HCT116 (cell line): ENCODE measurements at regions of chr9 and their contacts with region 1.

Region 1: DNA sequence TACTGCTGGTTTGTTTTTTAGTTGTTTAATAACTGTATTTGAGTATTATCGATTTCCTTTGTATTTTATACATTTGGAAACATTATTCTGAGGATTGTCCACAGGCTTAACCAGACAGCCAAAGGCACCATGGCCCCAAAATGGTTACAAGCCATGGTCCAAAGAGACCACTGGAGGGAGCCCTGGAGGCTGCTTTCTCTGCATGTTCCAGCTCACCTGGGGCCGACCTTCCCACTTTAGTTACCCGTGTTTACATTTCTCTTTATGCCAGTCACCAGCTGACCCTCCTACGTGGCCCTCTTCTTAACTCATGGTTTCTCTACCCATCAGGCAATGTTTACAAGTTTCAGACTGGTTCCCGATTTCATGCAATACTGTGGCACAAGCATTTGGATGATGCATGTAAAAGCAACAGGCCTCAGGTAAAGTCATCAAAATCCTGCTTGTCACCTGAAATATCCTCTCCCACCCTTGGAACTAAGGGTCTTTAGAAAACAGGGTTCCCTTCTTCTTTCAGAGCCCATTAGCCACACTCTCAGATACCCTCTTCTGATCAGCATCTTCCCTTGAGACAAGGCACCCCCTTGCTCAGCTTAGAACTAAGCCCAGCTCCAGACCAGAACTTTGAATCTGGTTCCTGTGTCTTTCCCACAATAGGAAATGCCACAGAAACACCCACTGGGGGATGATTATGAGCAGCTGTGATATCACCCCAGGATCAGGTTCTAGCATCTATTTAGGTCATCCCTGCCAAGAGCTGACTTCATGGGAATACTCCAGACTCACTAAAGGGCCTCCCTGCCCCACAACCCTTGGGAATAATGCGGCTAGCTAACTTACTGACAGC is 49.9 kb upstream of the GARNL3 start:
- DNase-seq: peak; percentile 48
- ATAC-seq: peak; percentile 86
- H3K4me3 ChIP-seq: no peak overlapping the region
- H3K27ac ChIP-seq: no peak overlapping the region
- H3K4me1 ChIP-seq: peaks cover 0 to 4% of the 10 kb centered on the region in 2 experiments; a peak in 1 of 4 replicates
- H3K27me3 ChIP-seq: no peaks in the 10 kb centered on the region
- CTCF ChIP-seq: peak; percentile 78 to 91 (median 90)
- POLR2A ChIP-seq: no peak
- RAD21 ChIP-seq: peak; percentile 88

Region 2: GRCh38 chr9:126939821-126940221 is 274.8 kb before region 1 on chr9:
- CTCF ChIA-PET with region 1: interaction called, 15 read pairs
- POLR2A ChIA-PET with region 1: no interaction called
- RAD21 ChIA-PET with region 1: no interaction called
- intact Hi-C with region 1: no loop called
- DNase-seq: no peak
- ATAC-seq: no peak
- H3K4me3 ChIP-seq: no peak overlapping the region
- H3K27ac ChIP-seq: no peak overlapping the region
- H3K4me1 ChIP-seq: no peaks in the 10 kb centered on the region
- H3K27me3 ChIP-seq: no peaks in the 10 kb centered on the region
- CTCF ChIP-seq: no peak
- POLR2A ChIP-seq: no peak
- RAD21 ChIP-seq: no peak

Region 3: DNA sequence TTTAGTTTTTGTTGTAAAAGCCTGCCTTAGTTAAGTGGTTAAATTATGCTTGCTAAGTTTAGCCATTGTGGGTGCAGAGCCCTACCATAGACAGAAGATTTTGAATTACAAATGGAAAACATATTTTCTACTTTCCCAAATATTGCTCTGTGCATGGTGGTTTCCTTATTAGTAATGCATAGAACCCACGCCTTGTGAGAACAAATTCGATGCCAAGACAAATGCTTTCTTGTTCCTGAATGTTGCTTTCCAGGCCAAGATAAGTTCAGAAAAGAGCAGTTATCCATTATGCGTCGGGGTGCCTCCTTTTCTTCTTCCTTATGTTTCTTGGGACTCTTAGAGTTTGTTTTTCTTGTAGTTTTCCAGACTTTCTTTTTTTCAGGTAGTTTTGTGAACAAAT is 18.9 kb after region 1 on chr9:
- CTCF ChIA-PET with region 1: no interaction called
- POLR2A ChIA-PET with region 1: no interaction called
- RAD21 ChIA-PET with region 1: no interaction called
- intact Hi-C with region 1: no loop called
- DNase-seq: no peak
- ATAC-seq: no peak
- H3K4me3 ChIP-seq: no peak overlapping the region
- H3K27ac ChIP-seq: no peak overlapping the region
- H3K4me1 ChIP-seq: no peaks in the 10 kb centered on the region
- H3K27me3 ChIP-seq: no peaks in the 10 kb centered on the region
- CTCF ChIP-seq: no peak
- POLR2A ChIP-seq: no peak
- RAD21 ChIP-seq: no peak

Region 4: GRCh38 chr9:127347831-127348779 is 133.5 kb after region 1 on chr9:
- CTCF ChIA-PET with region 1: no interaction called
- POLR2A ChIA-PET with region 1: no interaction called
- RAD21 ChIA-PET with region 1: no interaction called
- intact Hi-C with region 1: loop called (anchors 1 kb)
- DNase-seq: no peak
- ATAC-seq: peak; percentile 73
- H3K4me3 ChIP-seq: no peak overlapping the region
- H3K27ac ChIP-seq: no peak overlapping the region
- H3K4me1 ChIP-seq: no peaks in the 10 kb centered on the region
- H3K27me3 ChIP-seq: no peaks in the 10 kb centered on the region
- CTCF ChIP-seq: peak in 2 of 3 experiments; percentile 20; a peak in 2 of 6 replicates
- POLR2A ChIP-seq: no peak
- RAD21 ChIP-seq: peak; percentile 49; the same call in 1 of the 2 replicates

Region 5: GRCh38 chr9:127396808-127397497 is 182.3 kb after region 1 on chr9 and contains the start of gene SLC2A8:
- CTCF ChIA-PET with region 1: interaction called, 16 read pairs
- POLR2A ChIA-PET with region 1: no interaction called
- RAD21 ChIA-PET with region 1: interaction called in 1 of 2 experiments, 5 read pairs
- intact Hi-C with region 1: no loop called
- DNase-seq: peak; percentile 99
- ATAC-seq: peak; percentile 93
- H3K4me3 ChIP-seq: peak within 1 kb of the TSS; percentile 59 to 73
- H3K27ac ChIP-seq: peak within 1 kb of the TSS; percentile 56; the same call in 1 of the 2 replicates
- H3K4me1 ChIP-seq: peaks cover 3 to 27% of the 10 kb centered on the region in 2 experiments; a peak in 3 of 4 replicates
- H3K27me3 ChIP-seq: no peaks in the 10 kb centered on the region
- CTCF ChIP-seq: peak in 1 of 3 experiments; percentile 7; a peak in 1 of 6 replicates
- POLR2A ChIP-seq: no peak
- RAD21 ChIP-seq: no peak
- total RNA-seq, gene SLC2A8: 16.8 TPM

Region 6: DNA sequence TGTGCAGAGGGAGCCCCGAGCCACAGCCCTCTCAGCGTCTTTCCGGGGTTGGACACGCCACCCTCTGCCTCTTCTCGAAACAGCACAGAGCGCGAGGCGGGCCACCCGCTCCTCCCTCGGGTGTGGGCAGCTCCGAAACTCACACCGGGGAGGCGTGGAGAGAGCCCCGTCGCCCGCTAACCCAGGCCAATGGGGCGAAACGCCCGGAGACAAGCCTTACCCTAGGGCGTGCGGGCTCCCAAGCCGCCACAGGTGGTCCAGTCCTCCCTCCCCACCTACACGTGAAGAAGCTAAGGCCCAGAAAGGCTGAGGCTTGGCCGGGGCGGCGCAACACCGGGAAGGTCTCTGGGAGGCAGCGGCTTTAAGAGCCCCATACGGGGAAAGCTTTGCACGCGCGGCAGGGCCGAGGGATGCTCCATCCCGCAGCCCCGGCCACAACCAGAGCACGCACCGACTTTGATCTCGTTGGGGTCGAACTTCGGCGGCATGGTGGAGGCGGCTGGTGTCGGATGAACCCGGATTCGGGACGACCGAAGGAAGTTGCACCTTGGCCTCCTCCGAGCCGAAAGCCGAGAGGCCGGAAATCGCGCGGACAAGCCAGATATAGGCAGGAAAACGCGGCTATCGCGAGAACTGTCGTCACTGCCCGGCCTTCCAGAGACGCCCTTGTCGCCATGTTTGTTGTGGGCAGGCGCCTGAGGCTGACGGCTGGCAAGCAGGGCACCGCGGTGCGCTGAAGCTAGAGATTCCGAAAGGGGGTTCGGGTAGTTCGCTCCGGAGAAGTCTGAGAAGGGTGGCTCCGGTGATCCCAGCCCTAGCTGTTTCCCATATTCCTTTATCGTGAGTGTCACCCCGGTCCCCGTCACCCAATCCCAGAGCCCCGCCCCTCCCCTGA is 236.4 kb after region 1 on chr9 and contains the starts of genes LRSAM1 and RPL12:
- CTCF ChIA-PET with region 1: interaction called, 3 read pairs
- POLR2A ChIA-PET with region 1: interaction called, 3 read pairs
- RAD21 ChIA-PET with region 1: interaction called in 1 of 2 experiments, 4 read pairs
- intact Hi-C with region 1: loop called (anchors 1 kb)
- DNase-seq: peak; percentile 88
- ATAC-seq: peak; percentile 60
- H3K4me3 ChIP-seq: peak within 1 kb of the TSS; percentile 87 to 98
- H3K27ac ChIP-seq: peak within 1 kb of the TSS; percentile 97
- H3K4me1 ChIP-seq: peaks cover 11 to 52% of the 10 kb centered on the region in 2 experiments
- H3K27me3 ChIP-seq: no peaks in the 10 kb centered on the region
- CTCF ChIP-seq: no peak
- POLR2A ChIP-seq: peak; percentile 99
- RAD21 ChIP-seq: no peak
- total RNA-seq, gene LRSAM1: 25.9 TPM
- total RNA-seq, gene RPL12: 2,679 TPM